Activated CD4-positive, alpha-beta memory T cell treated with anti-CD3 and anti-CD28 coated beads for 36 hours (primary cell): ENCODE measurements at regions of chr16 and their contacts with region 1.

Region 1: DNA sequence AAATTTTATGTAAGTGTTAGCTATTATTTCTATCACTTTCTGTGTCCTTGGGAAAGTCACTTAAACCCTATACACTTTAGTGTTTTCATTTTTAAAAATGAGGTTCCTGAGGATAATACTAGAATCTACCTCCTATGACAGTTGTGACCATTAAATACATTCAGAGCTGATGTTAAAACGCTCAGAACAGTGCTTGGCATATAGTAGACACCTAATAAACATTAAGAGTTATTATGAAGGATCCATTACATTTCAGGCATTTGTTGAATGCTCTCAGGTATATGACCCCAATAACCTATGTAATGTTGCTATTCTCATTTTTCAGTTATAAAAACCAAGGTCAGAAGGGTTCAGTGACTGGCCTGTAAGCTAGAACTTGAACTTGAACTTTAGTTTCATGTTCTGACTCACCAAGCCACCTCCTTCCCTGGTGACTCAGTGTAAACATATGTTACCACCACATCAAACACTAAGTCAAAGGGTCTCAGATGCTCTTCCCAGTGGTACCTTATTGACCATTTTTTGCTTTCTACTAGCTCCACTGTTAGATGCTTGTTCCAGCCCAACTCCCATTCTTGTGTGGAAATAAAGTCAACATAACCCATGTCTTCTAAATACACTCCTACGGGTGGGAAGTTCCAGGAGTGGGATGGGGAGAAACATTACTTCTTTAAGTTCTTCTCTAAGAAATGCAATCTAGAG is 47.6 kb downstream of the HSD17B2 start:
- DNase-seq: peak; percentile 10
- H3K4me3 Mint-ChIP-seq: no peak overlapping the region
- H3K27ac Mint-ChIP-seq: no peak overlapping the region
- H3K4me1 Mint-ChIP-seq: peaks cover 4% of the 10 kb centered on the region
- H3K27me3 Mint-ChIP-seq: peaks cover 21% of the 10 kb centered on the region

Region 2: GRCh38 chr16:82192665-82193064 is 110.0 kb after region 1 on chr16:
- CTCF ChIA-PET with region 1: no interaction called
- POLR2A ChIA-PET with region 1: no interaction called
- intact Hi-C with region 1: loop called (anchors 5 kb)
- DNase-seq: peak; percentile 58
- H3K4me3 Mint-ChIP-seq: no peak overlapping the region
- H3K27ac Mint-ChIP-seq: peak overlapping the region; percentile 59
- H3K4me1 Mint-ChIP-seq: peaks cover 25% of the 10 kb centered on the region
- H3K27me3 Mint-ChIP-seq: peaks cover 14% of the 10 kb centered on the region